Naive thymus-derived CD4-positive, alpha-beta T cell (primary cell): ENCODE measurements at regions of chr18 and their contacts with region 1.

Region 1: GRCh38 chr18:53603276-53603675 is 621.2 kb downstream of the MBD2 start:
- DNase-seq: no peak
- ATAC-seq: no peak
- H3K4me3 ChIP-seq: no peak overlapping the region
- H3K4me3 Mint-ChIP-seq: no peak overlapping the region
- H3K27ac ChIP-seq: no peak overlapping the region
- H3K27ac Mint-ChIP-seq: no peak overlapping the region
- H3K4me1 ChIP-seq: no peaks in the 10 kb centered on the region
- H3K4me1 Mint-ChIP-seq: no peaks in the 10 kb centered on the region
- H3K27me3 ChIP-seq: no peaks in the 10 kb centered on the region
- H3K27me3 Mint-ChIP-seq: no peaks in the 10 kb centered on the region

Region 2: DNA sequence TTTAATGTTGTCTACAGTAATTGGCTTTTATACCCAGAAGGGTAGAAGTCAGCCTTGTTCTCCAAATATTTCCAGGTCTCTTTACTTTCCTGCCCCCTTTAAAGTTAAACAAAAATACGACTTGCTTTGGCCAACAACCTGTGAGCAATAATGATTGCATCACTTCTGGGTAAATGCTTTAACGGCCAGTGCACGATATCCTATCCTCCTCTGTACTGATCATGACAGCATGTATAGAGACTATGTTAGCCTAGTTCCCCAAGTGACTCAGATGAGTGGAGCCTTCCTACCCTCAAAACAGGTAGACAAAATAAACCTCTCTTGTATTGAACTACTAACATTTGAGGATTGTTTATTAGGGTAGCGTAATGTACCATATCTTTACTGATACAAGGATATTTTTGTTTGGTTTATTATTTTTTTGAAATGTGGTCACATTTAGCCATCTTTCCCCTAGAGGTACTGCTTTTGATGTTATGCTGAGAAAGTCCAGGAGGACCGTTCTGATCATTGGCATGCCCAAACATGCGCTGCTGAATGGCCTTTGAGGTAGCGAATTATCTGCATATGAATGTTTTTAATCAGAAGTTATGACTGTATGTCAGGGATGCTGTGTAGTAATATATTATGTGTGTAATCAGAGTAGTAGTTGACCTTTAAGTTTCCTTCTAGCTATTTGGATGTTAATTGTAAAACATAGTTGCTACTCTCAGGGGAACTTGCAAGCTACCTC is 1525.9 kb before region 1 on chr18:
- CTCF ChIA-PET with region 1: no interaction called
- POLR2A ChIA-PET with region 1: no interaction called
- intact Hi-C with region 1: no loop called
- DNase-seq: no peak
- ATAC-seq: no peak
- H3K4me3 ChIP-seq: no peak overlapping the region
- H3K4me3 Mint-ChIP-seq: no peak overlapping the region
- H3K27ac ChIP-seq: no peak overlapping the region
- H3K27ac Mint-ChIP-seq: no peak overlapping the region
- H3K4me1 ChIP-seq: no peaks in the 10 kb centered on the region
- H3K4me1 Mint-ChIP-seq: no peaks in the 10 kb centered on the region
- H3K27me3 ChIP-seq: no peaks in the 10 kb centered on the region
- H3K27me3 Mint-ChIP-seq: no peaks in the 10 kb centered on the region

Region 3: GRCh38 chr18:53544917-53545316 is 58.4 kb before region 1 on chr18:
- CTCF ChIA-PET with region 1: no interaction called
- POLR2A ChIA-PET with region 1: no interaction called
- intact Hi-C with region 1: loop called in 1 of 2 experiments (anchors 10 kb)
- DNase-seq: no peak
- ATAC-seq: no peak
- H3K4me3 ChIP-seq: no peak overlapping the region
- H3K4me3 Mint-ChIP-seq: no peak overlapping the region
- H3K27ac ChIP-seq: no peak overlapping the region
- H3K27ac Mint-ChIP-seq: no peak overlapping the region
- H3K4me1 ChIP-seq: no peaks in the 10 kb centered on the region
- H3K4me1 Mint-ChIP-seq: peaks cover 0 to 1% (median 0%) of the 10 kb centered on the region in 7 donors
- H3K27me3 ChIP-seq: no peaks in the 10 kb centered on the region
- H3K27me3 Mint-ChIP-seq: no peaks in the 10 kb centered on the region